ENCODE measurements at regions of chr3 and their contacts with region 1.

Region 1: GRCh38 chr3:38542401-38543298 is 46.5 kb downstream of the EXOG start:
- DNase-seq: no peak
- ATAC-seq: peak; percentile 20 to 50

Region 2: GRCh38 chr3:38421679-38422336 is 120.8 kb before region 1 on chr3:
- intact Hi-C with region 1: no loop called
- DNase-seq: no peak
- ATAC-seq: no peak

Region 3: DNA sequence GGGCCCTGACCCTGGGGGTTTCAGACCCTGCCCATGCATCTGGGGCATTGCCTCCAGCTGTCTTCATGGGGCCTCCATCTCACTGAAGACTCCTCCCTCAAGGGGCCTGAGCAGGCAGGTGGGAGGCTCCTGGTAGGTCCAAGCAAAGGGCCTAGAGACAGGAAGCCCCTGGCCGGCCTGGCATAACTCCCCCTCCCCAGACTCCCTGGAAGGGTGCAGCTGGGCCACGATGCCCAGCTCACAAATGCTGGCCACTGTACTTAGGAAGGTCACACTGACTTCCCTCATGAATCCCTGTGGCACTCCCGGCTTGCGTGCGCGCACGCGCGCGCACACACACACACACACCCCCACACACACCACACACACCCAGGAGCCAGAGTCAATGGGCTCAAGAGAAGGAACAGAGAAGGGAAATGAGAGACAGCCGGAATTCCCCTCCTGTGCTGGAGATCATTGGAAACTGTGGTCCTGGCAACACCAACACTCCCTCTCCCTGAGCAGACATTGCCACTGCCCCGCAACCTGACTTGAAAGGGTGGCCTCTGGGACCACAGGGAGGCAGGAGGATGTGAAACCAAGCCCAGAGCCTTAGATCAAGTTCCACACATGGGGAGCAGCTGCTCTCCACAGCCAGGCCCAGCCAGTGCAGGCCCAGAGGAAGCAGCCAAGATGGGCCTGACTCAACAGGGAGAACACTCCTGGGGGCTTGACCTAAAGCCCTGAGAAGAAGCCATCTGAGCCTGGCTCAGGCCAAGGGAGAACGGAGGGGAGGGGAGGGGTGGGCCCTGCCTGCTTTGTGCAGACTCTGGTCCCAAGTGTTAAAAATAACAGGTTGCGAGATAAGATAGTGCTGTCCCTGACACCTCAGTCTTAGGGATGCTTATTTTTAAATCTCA is 37.1 kb after region 1 on chr3:
- intact Hi-C with region 1: loop called in 1 of 2 experiments (anchors 5 kb)
- DNase-seq: peak; percentile 61
- ATAC-seq: peak; percentile 84 to 86

Region 4: DNA sequence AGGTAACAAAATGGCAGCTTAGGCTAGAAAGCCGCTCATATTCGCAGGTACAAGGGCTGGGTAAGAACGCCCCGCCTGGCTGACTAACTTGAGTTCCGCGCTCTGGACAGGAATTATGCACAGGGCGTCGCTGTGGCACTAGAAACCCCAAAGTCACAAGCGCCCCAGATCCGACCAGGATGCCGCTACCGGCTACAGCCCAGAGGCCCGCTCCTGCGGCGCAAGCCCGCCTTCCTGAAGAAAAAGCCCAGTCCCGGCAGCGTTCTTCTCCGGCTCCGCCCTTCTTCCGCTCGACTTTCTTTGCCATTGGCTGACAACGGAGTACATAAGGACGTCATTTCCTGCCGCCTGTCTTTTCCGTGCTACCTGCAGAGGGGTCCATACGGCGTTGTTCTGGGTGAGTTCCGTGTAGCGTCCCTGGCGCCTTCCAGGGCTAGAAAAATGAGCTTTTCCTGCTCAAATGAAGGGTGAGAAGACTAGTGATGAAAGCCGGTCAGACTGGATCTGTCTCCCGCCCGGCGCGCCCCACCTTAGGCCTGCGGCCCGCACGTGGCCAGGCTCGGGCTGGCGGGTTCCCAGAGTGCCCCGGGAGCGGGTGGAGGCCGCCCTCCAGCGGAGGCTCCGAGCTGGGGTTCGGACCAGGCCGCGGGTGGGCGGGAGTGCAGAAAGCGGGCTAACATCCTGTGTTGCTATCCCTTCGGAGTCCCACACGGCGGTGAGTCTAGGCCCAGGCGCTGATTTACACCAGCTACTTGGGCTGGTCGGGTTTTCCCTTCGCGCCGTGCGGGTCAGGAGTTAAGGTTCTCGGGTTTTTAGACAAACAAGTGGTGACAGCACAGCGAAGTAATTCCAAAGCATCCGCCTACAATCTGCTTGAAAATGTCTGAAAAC is 864.0 kb after region 1 on chr3 and contains the start of gene RPSA:
- intact Hi-C with region 1: no loop called
- DNase-seq: peak; percentile 97
- ATAC-seq: peak; percentile 97 to 98
- total RNA-seq, gene RPSA: 535 to 579 TPM

Measured in left cardiac atrium (tissue), 4 donors.